Right ventricle myocardium inferior (tissue), 1 donor: ENCODE measurements at regions of chr6 and their contacts with region 1.

Region 1: GRCh38 chr6:157764178-157765033 is 58.6 kb upstream of the SNX9 start:
- DNase-seq: peak; percentile 90
- ATAC-seq: peak; percentile 75

Region 2: GRCh38 chr6:157667211-157668008 is 97.0 kb before region 1 on chr6:
- intact Hi-C with region 1: loop called (anchors 5 kb)
- DNase-seq: no peak
- ATAC-seq: no peak

Region 3: DNA sequence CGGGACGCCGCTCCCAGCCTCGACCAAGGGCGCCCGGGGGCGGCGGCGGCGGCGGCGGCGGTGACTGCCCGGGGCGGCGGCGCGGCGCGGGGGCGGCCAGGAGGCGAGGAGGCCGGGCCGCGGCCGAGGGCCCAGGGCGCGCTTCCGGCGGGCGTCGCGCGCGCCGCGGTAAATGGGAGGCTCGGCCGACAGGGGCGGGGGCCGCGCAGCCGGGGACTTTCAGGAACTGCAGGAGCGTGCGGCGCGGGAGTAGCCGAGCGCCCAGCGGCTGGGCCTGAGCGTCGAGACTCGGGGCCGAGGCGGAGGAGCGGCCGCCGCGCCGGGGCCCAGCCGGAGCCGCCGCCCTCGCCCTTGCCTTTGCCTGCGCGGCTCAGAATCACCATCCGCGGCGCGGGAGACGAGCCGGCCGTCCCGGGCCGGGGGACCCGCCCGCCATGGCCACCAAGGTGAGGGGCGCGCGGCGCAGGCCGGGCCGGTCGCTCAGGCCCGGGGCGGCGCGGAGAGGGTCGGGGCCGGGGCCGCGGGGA is 58.7 kb after region 1 on chr6 and contains the start of gene SNX9:
- intact Hi-C with region 1: loop called (anchors 2 kb)
- DNase-seq: peak; percentile 92
- ATAC-seq: peak; percentile 97
- total RNA-seq, gene SNX9: 35.5 TPM

Region 4: GRCh38 chr6:157921685-157922367 is 157.4 kb after region 1 on chr6:
- intact Hi-C with region 1: no loop called
- DNase-seq: no peak
- ATAC-seq: peak; percentile 90